ENCODE measurements at regions of chr2 and their contacts with region 1.

Region 1: GRCh38 chr2:30475542-30475941 is 28.5 kb downstream of the LCLAT1 start:
- DNase-seq: no peak
- ATAC-seq: no peak
- H3K4me3 ChIP-seq: no peak overlapping the region
- H3K27ac ChIP-seq: no peak overlapping the region
- H3K4me1 ChIP-seq: no peaks in the 10 kb centered on the region
- H3K27me3 ChIP-seq: no peaks in the 10 kb centered on the region
- CTCF ChIP-seq: 0 out of 2 replicates have a peak, but pooled peaks have one; percentile 28

Region 2: DNA sequence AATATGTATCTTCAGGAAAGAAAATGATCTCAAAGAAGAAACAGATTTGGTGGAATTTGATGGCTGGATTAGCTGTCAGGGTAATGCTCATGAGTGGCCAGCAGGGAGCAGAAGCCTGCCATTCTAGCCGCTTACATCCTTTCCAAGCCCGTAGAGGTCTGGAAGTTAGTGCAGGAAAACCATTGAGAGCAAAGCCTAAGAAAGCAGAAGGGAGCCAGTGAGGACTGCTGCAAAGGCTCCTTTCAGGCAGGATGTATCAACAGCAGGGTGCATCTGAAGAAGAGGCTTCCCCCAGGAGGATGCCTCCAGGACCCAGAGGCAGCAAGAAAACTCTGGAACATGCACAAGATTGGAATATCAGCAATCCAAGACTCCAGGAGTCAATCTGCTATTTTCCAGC is 267.1 kb before region 1 on chr2:
- CTCF ChIA-PET with region 1: no interaction called
- POLR2A ChIA-PET with region 1: no interaction called
- intact Hi-C with region 1: loop called (anchors 2 kb)
- DNase-seq: peak; percentile 76
- ATAC-seq: peak; percentile 87
- H3K4me3 ChIP-seq: no peak overlapping the region
- H3K27ac ChIP-seq: no peak overlapping the region
- H3K4me1 ChIP-seq: no peaks in the 10 kb centered on the region
- H3K27me3 ChIP-seq: peaks cover 26% of the 10 kb centered on the region; the same call in 1 of the 2 replicates
- CTCF ChIP-seq: peak; percentile 93

Region 3: GRCh38 chr2:30366199-30366691 is 109.3 kb before region 1 on chr2:
- CTCF ChIA-PET with region 1: no interaction called
- POLR2A ChIA-PET with region 1: no interaction called
- intact Hi-C with region 1: no loop called
- DNase-seq: no peak
- ATAC-seq: no peak
- H3K4me3 ChIP-seq: no peak overlapping the region
- H3K27ac ChIP-seq: no peak overlapping the region
- H3K4me1 ChIP-seq: peaks cover 16% of the 10 kb centered on the region
- H3K27me3 ChIP-seq: no peaks in the 10 kb centered on the region
- CTCF ChIP-seq: no peak